ENCODE measurements at regions of chr1 and their contacts with region 1.

Region 1: GRCh38 chr1:12019858-12020509 is 686 bp downstream of the MIIP start:
- DNase-seq: no peak
- ATAC-seq: no peak
- H3K4me3 Mint-ChIP-seq: peak overlapping the region; percentile 88
- H3K27ac Mint-ChIP-seq: peak overlapping the region; percentile 79
- H3K4me1 Mint-ChIP-seq: peaks cover 4% of the 10 kb centered on the region
- H3K27me3 Mint-ChIP-seq: no peaks in the 10 kb centered on the region; the same call in 1 of the 2 replicates
- CTCF ChIP-seq: no peak

Region 2: DNA sequence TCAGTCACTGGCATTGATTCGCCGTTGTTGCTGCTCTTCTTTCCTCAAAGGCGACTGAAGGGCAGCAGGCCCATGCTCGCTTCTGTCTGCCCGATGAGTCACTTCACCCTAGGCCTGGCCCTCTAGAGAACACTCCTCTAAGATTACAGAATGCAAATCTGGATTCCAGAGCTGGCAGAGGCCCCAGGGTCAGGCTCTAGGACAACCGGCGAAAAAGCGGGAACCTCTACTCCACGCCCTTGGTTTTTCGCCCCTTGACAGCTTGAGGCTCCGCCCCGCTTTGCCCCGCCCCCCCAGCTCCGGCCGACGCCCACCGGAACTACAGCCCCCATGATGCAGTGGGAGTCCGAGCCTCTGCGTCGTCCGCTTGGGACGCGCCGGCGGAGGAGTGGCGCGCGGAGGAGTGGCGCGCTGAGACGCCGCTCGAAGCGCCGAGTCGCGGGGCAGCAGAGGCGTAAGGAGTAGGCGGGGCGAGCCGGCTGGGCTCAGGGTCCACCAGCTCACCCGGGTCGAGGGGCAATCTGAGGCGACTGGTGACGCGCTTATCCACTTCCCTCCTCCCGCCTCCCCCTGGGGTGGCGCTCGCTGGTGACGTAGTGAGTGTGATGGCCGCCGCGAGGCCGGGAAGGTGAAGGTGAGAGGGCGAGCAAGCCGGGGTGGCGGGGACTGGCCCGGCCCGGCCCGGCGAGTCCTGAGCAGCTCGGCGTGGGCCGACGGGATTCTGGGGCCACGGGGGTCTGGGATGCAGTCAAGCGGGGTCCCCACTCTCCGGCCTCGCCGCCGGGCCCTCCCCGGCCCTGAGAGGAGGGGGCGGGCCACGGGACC is 39.9 kb before region 1 on chr1 and contains the start of gene MFN2:
- CTCF ChIA-PET with region 1: interaction called, 3 read pairs
- POLR2A ChIA-PET with region 1: interaction called, 17 read pairs
- DNase-seq: peak; percentile 99
- ATAC-seq: peak; percentile 97
- H3K4me3 Mint-ChIP-seq: peak within 1 kb of the TSS; percentile 98
- H3K27ac Mint-ChIP-seq: peak within 1 kb of the TSS; percentile 99
- H3K4me1 Mint-ChIP-seq: peaks cover 21% of the 10 kb centered on the region
- H3K27me3 Mint-ChIP-seq: no peaks in the 10 kb centered on the region
- CTCF ChIP-seq: no peak
- total RNA-seq, gene MFN2: 56.8 to 63.0 TPM (median 59.8 TPM) in 3 replicates

Region 3: GRCh38 chr1:12031039-12031980 is 11.3 kb after region 1 on chr1:
- CTCF ChIA-PET with region 1: interaction called, 17 read pairs
- POLR2A ChIA-PET with region 1: interaction called, 6 read pairs
- DNase-seq: peak; percentile 72
- ATAC-seq: peak; percentile 84
- H3K4me3 Mint-ChIP-seq: no peak overlapping the region
- H3K27ac Mint-ChIP-seq: no peak overlapping the region
- H3K4me1 Mint-ChIP-seq: no peaks in the 10 kb centered on the region
- H3K27me3 Mint-ChIP-seq: no peaks in the 10 kb centered on the region
- CTCF ChIP-seq: no peak; the same call in 1 of the 2 replicates